Dendritic cell treated with granulocyte-macrophage colony-stimulating factor and Interleukin-4, amounts not matched to agents 40 ng/mL and 50 ng/mL, for 4 days (primary cell): ENCODE measurements at regions of chr3 and their contacts with region 1.

Region 1: DNA sequence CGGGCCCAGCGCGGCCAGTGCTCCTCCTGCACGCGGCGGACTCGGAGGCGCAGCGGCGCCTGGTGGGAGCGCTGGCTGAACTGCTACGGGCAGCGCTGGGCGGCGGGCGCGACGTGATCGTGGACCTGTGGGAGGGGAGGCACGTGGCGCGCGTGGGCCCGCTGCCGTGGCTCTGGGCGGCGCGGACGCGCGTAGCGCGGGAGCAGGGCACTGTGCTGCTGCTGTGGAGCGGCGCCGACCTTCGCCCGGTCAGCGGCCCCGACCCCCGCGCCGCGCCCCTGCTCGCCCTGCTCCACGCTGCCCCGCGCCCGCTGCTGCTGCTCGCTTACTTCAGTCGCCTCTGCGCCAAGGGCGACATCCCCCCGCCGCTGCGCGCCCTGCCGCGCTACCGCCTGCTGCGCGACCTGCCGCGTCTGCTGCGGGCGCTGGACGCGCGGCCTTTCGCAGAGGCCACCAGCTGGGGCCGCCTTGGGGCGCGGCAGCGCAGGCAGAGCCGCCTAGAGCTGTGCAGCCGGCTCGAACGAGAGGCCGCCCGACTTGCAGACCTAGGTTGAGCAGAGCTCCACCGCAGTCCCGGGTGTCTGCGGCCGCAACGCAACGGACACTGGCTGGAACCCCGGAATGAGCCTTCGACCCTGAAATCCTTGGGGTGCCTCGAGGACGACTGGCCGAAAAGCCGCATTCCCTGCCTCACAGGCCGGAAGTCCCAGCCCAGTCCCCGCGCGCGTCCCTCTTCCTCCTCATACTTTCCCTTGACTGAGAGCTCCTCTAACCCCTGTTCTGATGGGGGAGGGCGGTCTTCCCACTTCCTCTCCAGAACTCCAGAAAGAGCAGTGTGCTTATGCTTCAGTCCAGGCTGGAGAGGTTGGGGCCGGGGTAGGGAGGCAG is 1.4 kb upstream of the IL17RC start:
- H3K4me3 Mint-ChIP-seq: peak overlapping the region; percentile 79
- H3K27ac Mint-ChIP-seq: peak overlapping the region; percentile 89
- H3K4me1 Mint-ChIP-seq: peaks cover 55% of the 10 kb centered on the region
- H3K27me3 Mint-ChIP-seq: peaks cover 3% of the 10 kb centered on the region

Region 2: DNA sequence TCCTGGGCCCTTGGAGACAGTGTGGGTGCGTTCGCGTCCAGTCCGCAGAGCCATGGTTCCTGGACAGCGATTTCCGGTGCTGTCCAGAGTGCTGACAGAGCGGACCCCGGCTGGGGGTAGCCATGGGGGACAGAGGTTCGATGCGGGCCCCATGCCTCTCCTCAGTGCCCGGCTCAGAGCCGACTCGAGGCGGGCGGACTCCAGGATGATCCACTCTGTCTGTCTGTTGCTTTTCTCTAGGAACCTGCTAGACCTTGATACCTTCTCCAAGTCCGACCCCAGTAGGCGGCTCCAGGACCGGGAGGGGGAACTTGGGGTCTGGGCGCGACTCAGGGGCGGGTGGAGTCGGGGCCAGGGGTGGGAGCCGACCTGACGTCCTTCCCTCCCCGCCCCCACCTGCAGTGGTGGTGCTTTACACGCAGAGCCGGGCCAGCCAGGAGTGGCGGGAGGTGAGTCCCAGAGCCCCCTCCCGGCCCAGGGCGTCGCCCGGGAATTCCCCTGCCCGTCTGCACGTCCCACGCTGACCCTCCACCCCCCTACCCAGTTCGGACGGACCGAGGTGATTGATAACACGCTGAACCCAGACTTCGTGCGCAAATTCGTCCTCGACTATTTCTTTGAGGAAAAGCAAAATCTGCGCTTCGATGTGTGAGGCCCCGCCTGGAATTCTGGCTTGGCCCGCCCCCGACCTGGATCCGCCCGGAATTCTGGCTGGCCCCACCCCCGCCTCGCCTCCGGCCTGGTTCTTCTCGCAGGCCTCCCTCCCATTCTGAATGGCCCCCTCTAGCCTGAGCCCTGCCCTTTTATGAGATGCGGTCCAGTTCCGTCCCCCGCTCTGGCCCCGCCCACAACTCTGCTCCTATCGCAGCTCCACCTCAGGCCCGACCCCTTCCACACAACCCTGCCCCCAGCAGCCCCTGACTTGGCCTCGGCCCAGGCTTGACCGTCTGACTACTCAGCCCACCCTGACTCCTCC is 210.9 kb before region 1 on chr3:
- intact Hi-C with region 1: loop called (anchors 10 kb)
- H3K4me3 Mint-ChIP-seq: peak overlapping the region; percentile 62
- H3K27ac Mint-ChIP-seq: no peak overlapping the region
- H3K4me1 Mint-ChIP-seq: peaks cover 20% of the 10 kb centered on the region
- H3K27me3 Mint-ChIP-seq: peaks cover 64% of the 10 kb centered on the region

Region 3: GRCh38 chr3:9843715-9844438 is 71.6 kb before region 1 on chr3 and contains the start of gene RPUSD3:
- intact Hi-C with region 1: loop called (anchors 5 kb)
- H3K4me3 Mint-ChIP-seq: peak within 1 kb of the TSS; percentile 99
- H3K27ac Mint-ChIP-seq: peak within 1 kb of the TSS; percentile 90
- H3K4me1 Mint-ChIP-seq: peaks cover 31% of the 10 kb centered on the region
- H3K27me3 Mint-ChIP-seq: no peaks in the 10 kb centered on the region

Region 4: GRCh38 chr3:9890249-9891071 is 25.0 kb before region 1 on chr3 and contains the start of gene JAGN1:
- intact Hi-C with region 1: loop called (anchors 2 kb)
- H3K4me3 Mint-ChIP-seq: peak within 1 kb of the TSS; percentile 93
- H3K27ac Mint-ChIP-seq: peak within 1 kb of the TSS; percentile 95
- H3K4me1 Mint-ChIP-seq: peaks cover 17% of the 10 kb centered on the region
- H3K27me3 Mint-ChIP-seq: no peaks in the 10 kb centered on the region

Region 5: DNA sequence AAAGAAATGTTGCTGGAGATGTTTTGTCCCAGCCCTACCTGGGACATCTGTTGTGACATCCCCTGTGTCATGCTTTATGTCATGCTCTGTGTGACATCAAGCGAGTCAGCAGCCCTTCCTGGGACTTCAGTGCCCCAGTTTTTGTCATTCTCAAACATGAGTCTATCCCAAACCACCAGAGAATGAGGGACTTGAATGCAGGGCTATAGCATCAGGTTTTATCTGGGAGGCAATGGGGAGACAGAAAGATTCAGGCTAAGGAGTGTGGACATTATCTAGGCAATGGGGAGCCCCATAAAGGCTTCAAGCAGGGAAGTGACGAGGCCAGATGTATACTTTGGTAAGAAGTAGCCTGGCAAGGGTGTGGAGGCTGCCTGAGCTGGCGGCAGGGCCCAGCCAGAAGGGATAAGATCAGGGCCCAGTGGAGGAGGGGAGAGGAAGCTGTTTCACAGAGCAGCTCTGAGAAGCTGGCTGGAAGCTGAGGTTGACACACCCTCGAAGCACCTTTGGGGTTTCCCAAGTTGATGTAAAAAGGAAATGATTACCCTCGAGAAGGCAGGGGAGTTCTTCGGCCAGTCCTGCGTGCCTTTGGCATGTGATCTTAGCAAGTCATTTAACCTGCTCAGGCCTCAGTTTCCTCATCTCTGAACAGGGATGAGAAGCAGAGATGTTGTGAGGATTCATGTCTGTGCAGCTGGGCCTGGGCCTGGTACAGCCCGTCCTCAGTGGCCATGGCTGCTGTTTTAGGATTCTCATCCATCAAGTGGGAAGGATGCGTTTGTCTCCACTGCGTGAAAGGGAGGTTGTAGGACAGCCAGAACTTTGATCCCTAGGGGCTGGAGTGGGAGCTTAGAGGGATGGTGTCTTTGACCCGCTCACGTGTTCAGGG is 283.5 kb after region 1 on chr3:
- intact Hi-C with region 1: no loop called
- H3K4me3 Mint-ChIP-seq: no peak overlapping the region
- H3K27ac Mint-ChIP-seq: peak overlapping the region; percentile 71
- H3K4me1 Mint-ChIP-seq: peaks cover 46% of the 10 kb centered on the region
- H3K27me3 Mint-ChIP-seq: no peaks in the 10 kb centered on the region